Activated CD4-positive, alpha-beta T cell treated with anti-CD3 and anti-CD28 coated beads, Interleukin-2, amount 10 ng/mL, durations not matched to agents 24 days and 14 days (primary cell): ENCODE measurements at regions of chr10 and their contacts with region 1.

Region 1: GRCh38 chr10:73246783-73247508 is at the start of gene DNAJC9:
- DNase-seq: peak; percentile 99
- H3K4me3 Mint-ChIP-seq: peak within 1 kb of the TSS; percentile 98
- H3K27ac Mint-ChIP-seq: peak within 1 kb of the TSS; percentile 97
- H3K4me1 Mint-ChIP-seq: peaks cover 55% of the 10 kb centered on the region
- H3K27me3 Mint-ChIP-seq: no peaks in the 10 kb centered on the region
- total RNA-seq, gene DNAJC9: 54.2 and 56.6 TPM in 2 replicates

Region 2: DNA sequence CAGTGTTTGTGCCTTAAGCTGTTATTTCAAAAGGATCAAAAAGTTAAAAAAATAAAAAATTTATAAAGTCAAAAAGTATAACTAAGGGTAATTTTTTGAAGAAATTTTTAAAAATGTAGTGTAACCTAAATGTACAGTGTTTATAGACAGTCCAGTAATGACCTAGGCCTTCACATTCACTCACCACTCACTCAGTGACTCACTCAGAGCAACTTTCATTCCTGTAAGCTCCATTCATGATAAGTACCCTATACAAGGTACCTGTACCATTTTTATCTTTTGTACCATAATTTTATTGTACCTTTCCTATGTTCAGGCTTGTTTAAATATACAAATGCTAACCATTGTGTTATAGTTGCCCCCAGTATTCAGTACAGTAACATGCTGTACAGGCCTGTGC is 21.4 kb before region 1 on chr10:
- intact Hi-C with region 1: no loop called
- DNase-seq: no peak
- H3K4me3 Mint-ChIP-seq: no peak overlapping the region
- H3K27ac Mint-ChIP-seq: no peak overlapping the region
- H3K4me1 Mint-ChIP-seq: no peaks in the 10 kb centered on the region
- H3K27me3 Mint-ChIP-seq: no peaks in the 10 kb centered on the region

Region 3: GRCh38 chr10:73358331-73359279 is 111.7 kb after region 1 on chr10 and contains the start of gene CFAP70:
- intact Hi-C with region 1: loop called (anchors 2 kb)
- DNase-seq: peak; percentile 98
- H3K4me3 Mint-ChIP-seq: peak within 1 kb of the TSS; percentile 93
- H3K27ac Mint-ChIP-seq: peak within 1 kb of the TSS; percentile 89
- H3K4me1 Mint-ChIP-seq: peaks cover 16% of the 10 kb centered on the region
- H3K27me3 Mint-ChIP-seq: peaks cover 15% of the 10 kb centered on the region
- total RNA-seq, gene CFAP70: 0.17 and 0.33 TPM in 2 replicates